ENCODE measurements at regions of chr14 and their contacts with region 1.

Region 1: GRCh38 chr14:21269252-21270046 is at the start of gene HNRNPC:
- DNase-seq: peak; percentile 100
- H3K4me3 ChIP-seq: peak within 1 kb of the TSS; percentile 72 to 84
- H3K27ac ChIP-seq: peak within 1 kb of the TSS; percentile 96 to 97
- H3K4me1 ChIP-seq: peaks cover 15% of the 10 kb centered on the region
- H3K27me3 ChIP-seq: no peaks in the 10 kb centered on the region
- CTCF ChIP-seq: peak in 1 of 3 experiments; percentile 1
- POLR2A ChIP-seq: peak; percentile 90
- total RNA-seq, gene HNRNPC: 317 to 399 TPM

Region 2: DNA sequence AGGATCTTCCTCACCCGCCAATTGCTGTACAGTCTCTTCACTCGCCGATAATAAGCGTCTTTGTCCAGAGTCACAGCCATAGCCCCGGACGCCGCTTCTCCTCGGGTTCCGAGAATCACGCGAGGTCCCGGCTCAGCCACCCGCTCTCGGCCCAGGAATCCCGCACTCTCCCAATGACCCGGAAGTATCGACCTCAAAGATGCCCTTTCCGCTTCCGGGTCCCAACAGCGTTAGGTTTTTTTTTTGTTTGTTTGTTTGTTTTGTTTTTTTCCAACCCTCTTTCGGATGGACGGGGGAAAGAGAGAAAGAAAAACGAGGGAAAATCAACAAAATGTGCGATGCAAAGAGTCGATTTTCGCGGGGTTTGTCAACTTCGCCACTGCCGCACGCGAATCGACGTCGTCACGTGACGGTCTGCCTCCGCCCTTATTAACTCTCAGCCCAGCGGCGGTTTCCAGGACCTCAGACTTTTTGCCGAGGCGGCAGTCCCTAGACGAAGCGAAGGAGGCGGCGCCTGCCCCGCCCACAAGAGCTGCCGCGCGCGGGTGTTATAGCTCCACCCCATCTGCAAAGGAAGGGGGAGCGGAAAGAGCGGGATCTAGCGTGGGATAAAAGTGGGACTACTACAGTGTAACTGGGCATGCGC is 114.5 kb after region 1 on chr14 and contains the start of gene SUPT16H:
- intact Hi-C with region 1: loop called (anchors 10 kb)
- DNase-seq: peak; percentile 98
- H3K4me3 ChIP-seq: peak within 1 kb of the TSS; percentile 80
- H3K27ac ChIP-seq: peak within 1 kb of the TSS; percentile 87 to 91
- H3K4me1 ChIP-seq: peaks cover 12% of the 10 kb centered on the region
- H3K27me3 ChIP-seq: no peaks in the 10 kb centered on the region
- CTCF ChIP-seq: peak in 2 of 3 experiments; percentile 5 to 29
- POLR2A ChIP-seq: no peak
- total RNA-seq, gene SUPT16H: 104 to 112 TPM